Aorta (tissue), 5 donors: ENCODE measurements at regions of chr18 and their contacts with region 1.

Region 1: DNA sequence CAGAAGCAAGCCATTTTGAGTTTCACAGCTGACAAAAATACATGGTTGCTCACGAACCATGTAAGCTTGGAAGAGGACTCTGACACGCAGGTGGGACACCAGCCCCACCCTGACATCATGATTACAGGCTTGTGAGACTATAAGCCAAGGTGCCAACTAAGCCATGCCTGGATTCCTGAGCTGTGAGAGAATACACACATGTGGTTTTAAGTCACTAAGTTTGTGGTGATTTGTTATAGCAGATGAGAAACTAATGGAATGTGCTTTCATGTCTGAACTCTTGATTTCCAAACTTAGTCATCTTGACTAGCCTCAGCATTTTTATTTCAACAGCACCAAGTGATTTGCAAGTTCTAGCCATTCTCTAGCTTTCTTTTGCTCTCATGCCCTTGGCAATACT is 676.1 kb upstream of the CELF4 start:
- DNase-seq: no peak
- ATAC-seq: no peak
- H3K4me3 ChIP-seq: no peak overlapping the region
- H3K27ac ChIP-seq: no peak overlapping the region
- H3K4me1 ChIP-seq: no peaks in the 10 kb centered on the region
- H3K27me3 ChIP-seq: no peaks in the 10 kb centered on the region

Region 2: DNA sequence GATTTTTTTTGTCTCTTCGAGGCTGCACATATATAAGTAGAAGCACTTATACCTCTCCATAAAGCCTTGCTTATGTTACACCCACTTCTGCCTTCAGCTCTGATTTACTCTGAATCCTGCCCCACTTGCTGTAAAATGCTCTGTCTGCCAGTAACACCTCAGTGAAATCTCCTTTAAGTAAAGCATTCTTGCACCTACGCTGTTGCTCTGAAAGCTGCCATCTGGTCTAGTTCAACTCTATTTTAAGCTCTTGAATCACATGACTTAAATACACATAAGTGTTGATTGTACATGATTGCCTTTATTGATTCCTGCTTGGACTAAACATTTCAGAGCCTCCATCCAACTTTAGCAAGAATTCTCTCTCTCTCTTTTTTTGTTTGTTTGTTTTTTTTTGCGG is 67.1 kb before region 1 on chr18:
- intact Hi-C with region 1: no loop called
- DNase-seq: no peak
- ATAC-seq: no peak
- H3K4me3 ChIP-seq: no peak overlapping the region
- H3K27ac ChIP-seq: no peak overlapping the region
- H3K4me1 ChIP-seq: no peaks in the 10 kb centered on the region
- H3K27me3 ChIP-seq: no peaks in the 10 kb centered on the region

Region 3: GRCh38 chr18:38301621-38302020 is 59.9 kb after region 1 on chr18:
- intact Hi-C with region 1: loop called in 1 of 2 experiments (anchors 10 kb)
- DNase-seq: no peak
- ATAC-seq: no peak
- H3K4me3 ChIP-seq: no peak overlapping the region
- H3K27ac ChIP-seq: no peak overlapping the region
- H3K4me1 ChIP-seq: no peaks in the 10 kb centered on the region
- H3K27me3 ChIP-seq: peaks cover 0 to 1% of the 10 kb centered on the region in 2 donors

Region 4: GRCh38 chr18:38367473-38367872 is 125.7 kb after region 1 on chr18:
- intact Hi-C with region 1: no loop called
- DNase-seq: no peak
- ATAC-seq: no peak
- H3K4me3 ChIP-seq: no peak overlapping the region
- H3K27ac ChIP-seq: no peak overlapping the region
- H3K4me1 ChIP-seq: no peaks in the 10 kb centered on the region
- H3K27me3 ChIP-seq: no peaks in the 10 kb centered on the region